ENCODE measurements at regions of chrX and their contacts with region 1.

Region 1: DNA sequence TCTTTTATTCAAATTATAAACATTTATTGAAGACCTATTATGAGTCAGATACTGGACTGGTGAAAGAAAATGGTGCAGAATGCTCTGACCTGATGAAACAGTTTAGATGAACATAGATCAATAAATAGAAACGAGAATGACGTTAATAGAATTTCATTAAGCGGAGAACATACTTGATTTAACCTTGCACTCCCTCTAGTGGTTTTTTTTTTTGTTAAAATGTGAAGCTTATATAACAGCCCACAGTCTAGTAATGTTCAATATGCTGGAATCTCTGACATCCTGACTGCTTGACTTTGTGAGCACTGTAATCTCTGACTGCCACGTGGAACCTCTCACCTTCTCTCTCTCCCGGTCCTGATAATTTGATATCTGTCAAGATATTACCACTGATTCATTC is 32.3 kb downstream of the HDAC8 start:
- DNase-seq: no peak
- ATAC-seq: peak; percentile 42

Region 2: DNA sequence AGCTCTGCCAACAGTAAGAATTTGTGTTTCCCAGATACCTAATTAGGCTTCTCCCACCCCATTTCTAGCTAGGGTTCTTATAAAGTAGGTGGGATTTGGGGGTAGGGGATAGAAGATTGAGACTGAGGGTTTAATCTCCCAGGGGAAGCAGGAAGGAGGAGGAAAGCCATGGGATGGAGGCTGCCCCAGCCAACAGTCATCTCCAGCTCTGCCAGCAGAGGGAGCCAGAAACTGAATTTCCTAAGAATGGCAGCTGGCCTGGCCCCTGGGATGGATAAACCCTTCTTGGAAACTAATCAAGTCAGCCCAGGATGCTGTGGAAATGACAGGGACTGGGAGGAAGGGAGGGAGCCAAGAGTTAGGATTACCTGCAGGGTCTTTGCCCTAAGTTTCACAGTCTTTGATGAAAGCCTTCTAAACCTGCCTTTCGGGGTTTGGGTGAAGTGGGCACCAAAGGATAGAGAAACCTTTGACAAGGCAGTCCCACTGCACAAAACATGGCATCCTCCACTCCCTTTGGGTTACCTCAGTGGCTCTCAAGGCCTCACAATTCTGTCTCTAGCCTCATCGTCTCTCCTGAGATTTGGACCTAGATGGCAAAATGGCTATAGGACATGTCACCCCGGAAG is 294.7 kb before region 1 on chrX:
- intact Hi-C with region 1: loop called (anchors 2 kb)
- DNase-seq: no peak
- ATAC-seq: peak; percentile 57

Region 3: DNA sequence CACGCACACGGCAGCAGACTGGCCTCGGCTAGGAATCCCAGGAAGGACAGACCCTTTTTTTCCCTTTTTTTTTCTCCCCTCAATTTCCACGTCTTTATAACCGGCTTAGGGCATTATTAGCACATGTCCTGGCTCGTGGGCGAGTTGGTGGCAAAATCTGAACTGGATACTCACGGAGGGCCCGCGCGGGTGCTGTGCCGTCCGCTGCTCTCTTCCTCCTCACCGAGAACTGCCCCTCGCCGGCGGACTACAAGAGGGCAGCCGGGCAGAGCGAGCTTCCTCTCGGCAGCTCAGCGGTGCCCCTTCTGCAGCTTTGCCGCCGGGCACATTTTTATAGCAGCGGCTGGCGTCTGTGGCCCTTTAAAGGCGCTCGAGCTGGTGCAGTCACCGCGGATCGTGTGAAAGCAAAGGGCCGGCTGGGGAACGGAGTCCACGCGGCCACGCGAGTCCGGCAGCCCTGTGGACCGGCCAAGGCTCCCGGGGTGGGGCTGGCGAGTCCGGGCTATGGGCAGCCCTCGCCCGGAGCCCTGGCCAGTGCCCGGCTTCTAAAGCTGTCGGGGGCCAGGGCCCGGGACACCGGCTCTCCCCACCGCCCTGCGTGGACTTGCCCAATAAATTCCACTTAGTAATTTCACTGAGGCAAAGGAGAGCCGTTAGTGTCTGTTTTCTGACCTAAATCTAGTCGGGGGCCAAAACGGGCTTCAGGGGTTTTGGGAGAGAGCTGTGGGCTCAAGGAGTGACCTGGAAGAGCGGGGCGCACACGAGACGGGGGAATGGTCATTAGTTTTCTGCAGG is 233.3 kb before region 1 on chrX:
- intact Hi-C with region 1: loop called (anchors 5 kb)
- DNase-seq: peak; percentile 75
- ATAC-seq: peak; percentile 74

Region 4: GRCh38 chrX:72381439-72382201 is 158.7 kb before region 1 on chrX:
- intact Hi-C with region 1: loop called (anchors 10 kb)
- DNase-seq: no peak
- ATAC-seq: peak; percentile 88

Region 5: DNA sequence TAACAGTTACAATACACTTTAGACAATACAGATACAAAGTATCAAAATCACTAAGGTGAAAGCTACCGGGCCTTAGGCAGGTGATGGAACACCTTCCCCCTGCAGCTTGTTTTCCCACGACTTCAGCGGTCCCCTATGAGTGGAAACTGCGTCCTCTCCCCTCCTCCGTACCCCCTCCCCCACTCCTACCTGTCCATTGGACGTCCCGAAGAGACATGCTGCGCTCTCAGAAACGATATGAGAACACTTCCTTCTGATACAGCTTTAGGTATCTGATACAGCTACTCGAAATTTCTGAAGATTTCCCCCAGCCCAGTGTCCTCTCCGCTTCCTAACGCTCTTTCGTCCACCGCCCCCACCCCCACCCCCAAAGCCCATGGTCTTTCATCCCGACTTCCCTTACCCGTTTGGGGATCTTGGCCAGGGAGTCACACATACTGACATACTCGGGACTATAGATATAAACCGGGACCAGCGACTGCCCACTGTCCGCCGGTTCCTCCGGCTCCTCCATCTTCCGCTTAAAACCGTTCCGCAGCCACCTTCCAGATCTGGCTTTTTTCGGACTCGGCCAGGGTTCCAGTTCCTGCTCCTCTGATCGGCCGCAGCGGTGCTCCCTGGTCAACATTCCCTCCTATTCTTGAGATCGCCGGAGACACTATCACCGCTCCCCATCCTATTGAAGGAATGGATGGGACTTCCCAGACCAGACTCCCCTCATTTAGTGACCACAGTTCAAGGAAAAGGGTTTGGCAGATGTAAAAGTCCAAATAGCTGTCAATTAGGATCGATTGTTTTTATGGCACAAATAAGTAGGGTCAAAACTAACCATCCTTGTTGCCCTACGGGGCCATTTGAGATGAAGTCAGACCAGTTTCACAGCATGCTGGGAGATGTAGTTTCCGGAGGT is 32.2 kb after region 1 on chrX and contains the start of gene HDAC8:
- intact Hi-C with region 1: no loop called
- DNase-seq: peak; percentile 82
- ATAC-seq: peak; percentile 90
- total RNA-seq, gene HDAC8: 18.6 TPM

Region 6: GRCh38 chrX:72634331-72634730 is 94.0 kb after region 1 on chrX:
- intact Hi-C with region 1: no loop called
- DNase-seq: no peak
- ATAC-seq: no peak